ENCODE measurements at regions of chr6 and their contacts with region 1.

Region 1: GRCh38 chr6:26596579-26597388 is at the start of gene ABT1:
- DNase-seq: peak; percentile 87
- H3K4me3 ChIP-seq: peak within 1 kb of the TSS; percentile 90
- H3K27me3 ChIP-seq: no peaks in the 10 kb centered on the region
- CTCF ChIP-seq: no peak
- polyA plus RNA-seq, gene ABT1: 16.1 and 18.4 TPM in 2 replicates

Region 2: GRCh38 chr6:26172496-26172958 is 424.3 kb before region 1 on chr6:
- CTCF ChIA-PET with region 1: interaction called, 10 read pairs
- POLR2A ChIA-PET with region 1: no interaction called
- DNase-seq: no peak
- H3K4me3 ChIP-seq: peak overlapping the region; percentile 46
- H3K27me3 ChIP-seq: no peaks in the 10 kb centered on the region
- CTCF ChIP-seq: no peak

Region 3: GRCh38 chr6:26331218-26332073 is 265.3 kb before region 1 on chr6:
- CTCF ChIA-PET with region 1: interaction called, 12 read pairs
- POLR2A ChIA-PET with region 1: no interaction called
- DNase-seq: no peak
- H3K4me3 ChIP-seq: peak overlapping the region; percentile 41
- H3K27me3 ChIP-seq: no peaks in the 10 kb centered on the region
- CTCF ChIP-seq: no peak

Region 4: DNA sequence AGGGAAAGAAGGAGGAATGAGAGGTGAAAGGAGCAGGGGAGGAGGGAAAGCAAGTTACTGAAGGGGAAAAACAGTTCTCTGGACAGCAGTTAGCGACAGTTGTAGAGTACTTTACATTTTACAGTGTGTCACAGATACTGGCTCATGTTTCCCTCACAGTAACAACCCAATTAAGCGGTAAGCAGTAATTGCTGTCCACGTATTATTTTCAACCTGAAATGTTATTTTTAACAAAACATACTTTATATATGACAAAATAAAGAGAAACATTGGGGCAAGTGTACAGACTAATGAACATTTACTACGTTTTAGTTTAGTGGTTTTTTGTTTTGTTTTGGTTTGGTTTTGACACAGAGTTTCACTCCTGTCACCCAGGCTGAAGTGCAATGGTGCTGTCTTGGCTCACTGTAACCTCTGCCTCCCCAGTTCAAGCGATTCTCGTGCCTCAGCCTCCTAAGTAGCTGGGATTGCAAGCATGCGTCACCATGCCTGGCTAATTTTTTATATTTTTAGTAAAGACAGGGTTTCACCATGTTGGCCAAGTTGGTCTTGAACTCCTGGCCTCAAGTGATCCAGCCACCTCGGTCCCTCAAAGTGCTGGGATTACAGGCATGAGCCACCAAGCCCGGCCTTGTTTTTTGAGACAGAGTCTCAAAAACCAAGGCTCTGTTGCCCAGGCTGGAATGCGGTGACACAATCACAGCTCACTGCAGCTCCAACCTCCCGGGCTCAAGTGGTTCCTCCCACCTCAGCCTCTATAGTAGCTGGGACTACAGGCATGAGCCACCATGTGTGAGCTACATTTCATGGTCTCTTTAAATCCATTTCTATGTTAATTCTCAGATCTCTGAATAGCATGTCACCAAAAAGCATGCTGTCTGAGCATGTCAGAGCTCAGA is 254.4 kb before region 1 on chr6:
- CTCF ChIA-PET with region 1: interaction called, 41 read pairs
- POLR2A ChIA-PET with region 1: no interaction called
- DNase-seq: no peak
- H3K4me3 ChIP-seq: peak overlapping the region; percentile 14; the same call in 1 of the 2 replicates
- H3K27me3 ChIP-seq: no peaks in the 10 kb centered on the region
- CTCF ChIP-seq: no peak

Region 5: DNA sequence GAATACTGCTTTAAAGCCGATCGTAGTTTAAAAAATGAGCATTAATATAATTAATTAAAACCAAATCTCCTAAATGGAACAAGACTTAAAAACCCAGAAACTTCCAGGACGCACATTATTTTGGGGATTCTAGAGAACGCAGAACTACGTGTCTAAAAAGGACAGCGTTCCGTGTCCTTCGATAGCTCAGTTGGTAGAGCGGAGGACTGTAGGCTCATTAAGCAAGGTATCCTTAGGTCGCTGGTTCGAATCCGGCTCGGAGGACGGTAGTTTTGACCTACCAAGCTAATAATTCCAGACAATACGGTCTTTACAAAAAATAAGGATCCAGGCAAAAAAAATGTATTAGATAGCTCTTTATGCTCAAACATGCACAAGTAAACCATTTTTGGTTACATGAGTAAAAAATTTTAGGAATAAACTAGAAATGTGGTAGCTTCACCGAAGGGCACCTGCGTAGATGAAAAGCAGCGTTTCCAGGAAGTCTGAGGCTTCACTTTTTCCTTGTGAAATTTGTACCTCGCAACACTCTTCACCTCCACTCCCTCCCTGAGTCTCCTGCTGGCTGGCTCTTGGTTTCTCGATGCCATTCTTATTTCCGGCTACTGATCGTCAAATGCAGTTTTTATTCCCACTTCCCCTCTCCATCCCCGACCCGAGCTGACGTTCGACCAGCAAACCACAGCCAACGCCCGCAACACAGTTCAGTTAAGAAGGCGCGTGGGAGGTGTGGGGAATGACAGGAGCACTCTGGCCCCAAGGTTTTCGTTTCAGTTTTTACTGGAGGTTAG is 19.7 kb before region 1 on chr6:
- CTCF ChIA-PET with region 1: interaction called, 51 read pairs
- POLR2A ChIA-PET with region 1: interaction called, 4 read pairs
- DNase-seq: no peak
- H3K4me3 ChIP-seq: peak overlapping the region; percentile 21
- H3K27me3 ChIP-seq: no peaks in the 10 kb centered on the region
- CTCF ChIP-seq: no peak

Region 6: GRCh38 chr6:26607434-26608230 is 10.8 kb after region 1 on chr6:
- CTCF ChIA-PET with region 1: no interaction called
- POLR2A ChIA-PET with region 1: no interaction called
- DNase-seq: no peak
- H3K4me3 ChIP-seq: no peak overlapping the region
- H3K27me3 ChIP-seq: peaks cover 5% of the 10 kb centered on the region
- CTCF ChIP-seq: peak; percentile 83

Measured in BJ (cell line).